Astrocyte of the spinal cord (primary cell): ENCODE measurements at regions of chr11 and their contacts with region 1.

Region 1: DNA sequence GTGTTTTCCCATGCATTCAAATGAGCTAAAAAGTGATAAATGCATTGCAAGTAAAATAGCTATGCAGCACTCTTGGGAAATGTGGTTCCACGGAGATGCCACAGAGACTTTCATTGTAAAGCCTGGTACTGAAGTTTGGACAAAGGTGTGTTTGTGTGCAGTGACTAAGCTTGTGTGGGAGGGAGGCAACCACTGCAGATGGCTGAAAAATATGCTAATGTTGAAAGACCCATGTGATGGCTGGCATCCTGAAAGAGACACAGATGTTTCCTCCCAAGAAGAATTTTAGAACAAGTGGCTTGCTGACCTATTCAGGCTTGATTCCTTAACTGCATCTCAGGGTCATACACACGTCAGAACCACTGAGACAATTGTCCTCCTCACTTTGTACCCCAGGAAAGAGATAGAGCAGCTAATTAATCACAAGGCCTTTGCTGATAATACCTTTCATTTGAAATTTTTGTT is 73.8 kb downstream of the FAM76B start:
- DNase-seq: peak; percentile 66
- H3K4me3 ChIP-seq: no peak overlapping the region
- CTCF ChIP-seq: no peak

Region 2: GRCh38 chr11:94077552-94078293 is 1638.1 kb before region 1 on chr11:
- in situ Hi-C with region 1: no loop called
- DNase-seq: no peak
- H3K4me3 ChIP-seq: no peak overlapping the region
- CTCF ChIP-seq: no peak

Region 3: GRCh38 chr11:95067039-95067840 is 648.6 kb before region 1 on chr11:
- in situ Hi-C with region 1: loop called (anchors 10 kb)
- DNase-seq: peak; percentile 77
- H3K4me3 ChIP-seq: peak overlapping the region; percentile 90
- CTCF ChIP-seq: peak; percentile 55